ENCODE measurements at regions of chr1 and their contacts with region 1.

Region 1: GRCh38 chr1:6727535-6727934 is 25.9 kb upstream of the DNAJC11 start:
- DNase-seq: peak; percentile 44 to 65
- H3K4me3 ChIP-seq: no peak overlapping the region
- H3K27ac ChIP-seq: no peak overlapping the region
- H3K4me1 ChIP-seq: peaks cover 16 to 19% of the 10 kb centered on the region in 2 donors
- H3K27me3 ChIP-seq: no peaks in the 10 kb centered on the region
- CTCF ChIP-seq: peak; percentile 62 to 88 (median 72)
- POLR2A ChIP-seq: no peak

Region 2: DNA sequence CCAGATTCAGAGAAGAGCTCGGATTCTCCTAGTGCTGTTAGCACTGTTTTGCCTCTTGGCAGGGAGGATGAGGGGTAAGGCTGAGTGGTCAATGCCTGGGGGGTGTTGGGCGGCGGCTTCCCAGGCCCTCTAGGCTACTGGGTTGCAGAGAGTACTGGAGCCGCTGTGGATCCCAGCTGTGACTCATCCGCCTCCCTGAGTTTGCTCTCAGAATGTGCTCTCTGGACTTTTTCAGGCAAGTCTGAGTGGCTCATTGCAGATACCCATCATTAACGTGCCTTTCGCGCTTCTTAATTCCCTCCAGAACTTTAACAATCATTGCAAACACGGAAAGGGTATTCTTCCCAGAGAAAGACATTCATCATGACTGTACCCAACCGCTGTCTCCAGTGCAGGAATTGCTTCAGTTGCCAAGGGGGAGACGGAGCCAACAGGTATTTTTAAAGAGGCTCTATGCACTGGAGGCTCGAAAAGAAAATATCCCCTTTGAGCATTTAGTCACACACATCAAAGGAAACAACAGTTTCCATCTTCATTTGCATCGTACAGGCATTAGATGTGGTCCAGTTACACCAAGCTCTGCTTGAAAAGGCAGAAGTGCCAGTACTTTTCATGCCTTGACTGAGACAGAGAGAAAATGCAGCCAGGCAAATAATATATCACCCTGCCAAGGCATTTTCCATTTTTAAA is 43.4 kb after region 1 on chr1:
- intact Hi-C with region 1: loop called (anchors 10 kb)
- DNase-seq: peak; percentile 26 to 54
- H3K4me3 ChIP-seq: no peak overlapping the region
- H3K27ac ChIP-seq: peak overlapping the region in 1 of 3 donors; percentile 18
- H3K4me1 ChIP-seq: peaks cover 3 to 18% of the 10 kb centered on the region in 2 donors
- H3K27me3 ChIP-seq: no peaks in the 10 kb centered on the region
- CTCF ChIP-seq: no peak
- POLR2A ChIP-seq: no peak

Region 3: GRCh38 chr1:6889875-6890480 is 162.4 kb after region 1 on chr1:
- intact Hi-C with region 1: loop called (anchors 5 kb)
- DNase-seq: peak; percentile 67 to 75
- H3K4me3 ChIP-seq: no peak overlapping the region
- H3K27ac ChIP-seq: no peak overlapping the region
- H3K4me1 ChIP-seq: peaks cover 0 to 3% of the 10 kb centered on the region in 2 donors
- H3K27me3 ChIP-seq: no peaks in the 10 kb centered on the region
- CTCF ChIP-seq: peak; percentile 44 to 87 (median 78)
- POLR2A ChIP-seq: no peak

Region 4: GRCh38 chr1:6922096-6922931 is 194.8 kb after region 1 on chr1:
- intact Hi-C with region 1: no loop called
- DNase-seq: no peak
- H3K4me3 ChIP-seq: no peak overlapping the region
- H3K27ac ChIP-seq: no peak overlapping the region
- H3K4me1 ChIP-seq: peaks cover 0 to 5% of the 10 kb centered on the region in 2 donors
- H3K27me3 ChIP-seq: no peaks in the 10 kb centered on the region
- CTCF ChIP-seq: no peak
- POLR2A ChIP-seq: no peak

Region 5: GRCh38 chr1:7069931-7070330 is 342.4 kb after region 1 on chr1:
- intact Hi-C with region 1: loop called (anchors 10 kb)
- DNase-seq: no peak
- H3K4me3 ChIP-seq: no peak overlapping the region
- H3K27ac ChIP-seq: no peak overlapping the region
- H3K4me1 ChIP-seq: peaks cover 0 to 3% of the 10 kb centered on the region in 2 donors
- H3K27me3 ChIP-seq: no peaks in the 10 kb centered on the region
- CTCF ChIP-seq: no peak
- POLR2A ChIP-seq: no peak

Region 6: DNA sequence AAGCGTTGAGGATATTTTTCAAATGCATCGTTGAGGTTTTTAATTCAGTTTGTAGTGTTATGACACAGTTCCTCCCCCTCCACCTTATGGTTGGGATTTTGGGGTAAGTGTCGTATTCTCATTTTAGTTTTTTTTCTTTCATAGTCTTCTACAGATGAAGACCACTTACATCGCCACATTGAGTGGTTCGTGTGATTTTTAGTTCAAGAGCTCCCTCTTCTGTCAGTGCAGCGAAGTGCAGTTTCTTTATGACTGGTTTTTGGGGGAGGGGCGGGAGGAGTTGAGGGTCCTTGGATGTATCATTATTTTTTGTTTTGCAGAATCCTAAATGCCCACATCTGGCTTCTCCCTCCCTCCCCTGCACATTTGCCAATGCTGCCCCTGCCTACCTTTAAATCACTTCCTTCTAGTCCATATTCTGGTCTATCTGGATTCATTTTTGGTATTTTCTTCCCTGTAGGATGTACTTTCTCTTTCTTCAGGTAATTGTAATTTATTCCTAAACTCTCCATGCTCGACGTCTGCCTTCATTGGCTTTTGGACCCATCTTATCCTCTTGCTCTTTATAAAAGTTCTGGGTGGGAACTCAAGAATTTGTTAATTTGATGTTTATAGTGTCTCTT is 490.8 kb after region 1 on chr1:
- intact Hi-C with region 1: loop called (anchors 10 kb)
- DNase-seq: peak; percentile 30 to 38
- H3K4me3 ChIP-seq: no peak overlapping the region
- H3K27ac ChIP-seq: no peak overlapping the region
- H3K4me1 ChIP-seq: no peaks in the 10 kb centered on the region
- H3K27me3 ChIP-seq: no peaks in the 10 kb centered on the region
- CTCF ChIP-seq: peak in 5 of 6 experiments; percentile 15 to 72 (median 54)
- POLR2A ChIP-seq: no peak